ENCODE measurements at regions of chr10 and their contacts with region 1.

Region 1: DNA sequence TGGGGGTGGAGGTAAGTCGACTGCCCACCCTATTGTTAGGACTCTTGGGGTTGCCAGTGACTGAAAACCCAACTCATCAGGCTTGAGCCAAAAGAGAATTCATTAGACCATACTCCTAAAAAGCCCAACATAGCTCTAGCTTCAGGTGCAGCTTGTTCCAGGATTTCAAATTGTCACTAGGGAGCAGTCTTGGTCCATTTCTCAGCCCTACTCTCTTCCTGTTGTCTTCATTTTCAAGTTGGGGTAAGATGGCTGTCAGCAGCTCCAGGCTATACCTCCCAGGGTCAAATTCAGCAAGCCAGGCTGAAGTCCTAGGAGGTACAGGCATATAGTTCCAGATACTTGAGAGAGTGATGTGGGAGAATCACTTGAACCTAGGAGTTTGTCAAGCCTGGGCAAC is 14.9 kb upstream of the COL13A1 start:
- DNase-seq: no peak
- H3K4me3 ChIP-seq: no peak overlapping the region
- CTCF ChIP-seq: peak; percentile 48

Region 2: GRCh38 chr10:69248117-69248730 is 538.6 kb before region 1 on chr10:
- CTCF ChIA-PET with region 1: no interaction called
- POLR2A ChIA-PET with region 1: no interaction called
- DNase-seq: no peak
- H3K4me3 ChIP-seq: no peak overlapping the region
- CTCF ChIP-seq: no peak

Region 3: GRCh38 chr10:69769395-69769992 is 17.3 kb before region 1 on chr10:
- CTCF ChIA-PET with region 1: interaction called, 122 read pairs
- POLR2A ChIA-PET with region 1: no interaction called
- DNase-seq: peak; percentile 31
- H3K4me3 ChIP-seq: no peak overlapping the region
- CTCF ChIP-seq: no peak

Region 4: DNA sequence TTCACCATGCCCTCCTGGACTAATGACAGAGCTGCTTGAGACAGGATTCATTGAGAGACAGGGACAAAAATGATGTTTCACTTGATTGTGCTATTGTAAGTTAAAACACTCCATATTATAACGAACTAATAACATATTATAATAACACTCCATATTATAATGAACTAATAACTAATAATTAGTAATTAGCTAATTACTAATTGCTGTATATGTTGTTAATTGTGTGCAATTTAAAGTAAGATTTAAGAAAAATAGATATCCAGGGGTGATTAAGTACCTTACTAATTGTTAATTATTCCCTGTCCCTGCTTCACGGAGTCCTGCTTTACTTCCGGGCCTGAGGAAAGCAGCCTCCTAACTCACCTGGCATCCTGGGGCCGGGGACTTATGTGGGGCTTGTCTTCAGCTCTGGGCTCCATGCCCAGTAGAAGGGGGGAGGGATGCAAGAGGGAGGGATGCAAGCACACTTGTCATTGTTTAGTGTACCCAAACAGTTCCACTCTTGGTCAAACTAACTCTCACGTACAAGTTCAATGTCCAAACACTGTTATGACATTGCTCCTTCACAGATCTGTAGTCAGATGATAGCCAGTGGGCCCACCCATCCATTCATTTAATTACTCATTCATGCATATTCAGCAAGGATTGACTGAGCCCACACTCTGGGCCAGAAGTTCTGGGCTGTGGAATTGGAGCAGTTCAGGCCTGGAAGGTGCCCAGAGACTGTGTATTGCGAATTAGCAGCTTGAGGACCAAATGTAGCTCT is 68.7 kb after region 1 on chr10:
- CTCF ChIA-PET with region 1: no interaction called
- POLR2A ChIA-PET with region 1: no interaction called
- DNase-seq: no peak
- H3K4me3 ChIP-seq: no peak overlapping the region
- CTCF ChIP-seq: no peak

Region 5: GRCh38 chr10:69901628-69902505 is 115.1 kb after region 1 on chr10:
- CTCF ChIA-PET with region 1: interaction called, 13 read pairs
- POLR2A ChIA-PET with region 1: no interaction called
- DNase-seq: no peak
- H3K4me3 ChIP-seq: no peak overlapping the region
- CTCF ChIP-seq: peak; percentile 84

Region 6: GRCh38 chr10:69952069-69952800 is 165.4 kb after region 1 on chr10:
- CTCF ChIA-PET with region 1: interaction called, 145 read pairs
- POLR2A ChIA-PET with region 1: no interaction called
- DNase-seq: no peak
- H3K4me3 ChIP-seq: no peak overlapping the region
- CTCF ChIP-seq: no peak

Region 7: GRCh38 chr10:69963835-69964710 is 177.3 kb after region 1 on chr10:
- CTCF ChIA-PET with region 1: interaction called, 145 read pairs
- POLR2A ChIA-PET with region 1: no interaction called
- DNase-seq: no peak
- H3K4me3 ChIP-seq: no peak overlapping the region
- CTCF ChIP-seq: no peak

Region 8: DNA sequence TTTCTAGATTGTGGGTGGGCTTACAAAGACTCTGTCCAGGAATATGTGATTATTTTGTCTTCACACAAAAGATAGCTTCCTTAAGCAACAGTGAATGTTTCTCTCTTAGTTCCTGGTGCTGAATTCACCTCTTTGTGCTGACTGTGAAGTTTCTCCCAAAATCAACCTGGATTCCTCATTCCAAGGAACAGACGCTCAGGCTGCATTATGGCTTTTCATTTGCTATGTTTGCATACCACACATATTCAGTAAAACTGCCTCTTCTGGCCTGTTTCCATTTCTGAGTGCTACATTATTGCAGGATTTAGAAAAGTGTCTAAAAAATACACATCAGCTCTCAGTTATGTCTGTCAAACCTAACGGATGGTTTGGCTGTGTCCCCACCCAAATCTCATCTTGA is 287.4 kb after region 1 on chr10:
- CTCF ChIA-PET with region 1: no interaction called
- POLR2A ChIA-PET with region 1: no interaction called
- DNase-seq: no peak
- H3K4me3 ChIP-seq: no peak overlapping the region
- CTCF ChIP-seq: no peak

Region 9: GRCh38 chr10:70146489-70147258 is 359.9 kb after region 1 on chr10 and contains the start of gene TYSND1:
- CTCF ChIA-PET with region 1: interaction called, 19 read pairs
- POLR2A ChIA-PET with region 1: no interaction called
- DNase-seq: peak; percentile 82
- H3K4me3 ChIP-seq: peak within 1 kb of the TSS; percentile 66
- CTCF ChIP-seq: peak; percentile 91